A549 (cell line): ENCODE measurements at regions of chr6 and their contacts with region 1.

Region 1: GRCh38 chr6:16296061-16296670 is 57.8 kb downstream of the GMPR start:
- DNase-seq: no peak
- ATAC-seq: no peak
- H3K4me3 ChIP-seq: no peak overlapping the region
- H3K27ac ChIP-seq: no peak overlapping the region
- H3K4me1 ChIP-seq: no peaks in the 10 kb centered on the region
- CTCF ChIP-seq: no peak
- EP300 ChIP-seq: no peak
- POLR2A ChIP-seq: no peak
- RAD21 ChIP-seq: no peak

Region 2: GRCh38 chr6:16286148-16286522 is 10.0 kb before region 1 on chr6:
- CTCF ChIA-PET with region 1: interaction called, 19 read pairs
- POLR2A ChIA-PET with region 1: no interaction called
- DNase-seq: peak; percentile 39 to 55
- ATAC-seq: peak; percentile 90 to 93
- H3K4me3 ChIP-seq: no peak overlapping the region
- H3K27ac ChIP-seq: no peak overlapping the region
- H3K4me1 ChIP-seq: no peaks in the 10 kb centered on the region
- CTCF ChIP-seq: peak; percentile 68
- EP300 ChIP-seq: no peak
- POLR2A ChIP-seq: no peak
- RAD21 ChIP-seq: peak; percentile 61 to 65; a peak in 4 of 5 replicates

Region 3: GRCh38 chr6:16481697-16482399 is 185.7 kb after region 1 on chr6:
- CTCF ChIA-PET with region 1: no interaction called
- POLR2A ChIA-PET with region 1: no interaction called
- DNase-seq: no peak
- ATAC-seq: no peak
- H3K4me3 ChIP-seq: no peak overlapping the region
- H3K27ac ChIP-seq: no peak overlapping the region
- H3K4me1 ChIP-seq: no peaks in the 10 kb centered on the region
- CTCF ChIP-seq: no peak
- EP300 ChIP-seq: no peak
- POLR2A ChIP-seq: no peak
- RAD21 ChIP-seq: no peak